Breast epithelium (tissue), 4 donors: ENCODE measurements at regions of chr7 and their contacts with region 1.

Region 1: DNA sequence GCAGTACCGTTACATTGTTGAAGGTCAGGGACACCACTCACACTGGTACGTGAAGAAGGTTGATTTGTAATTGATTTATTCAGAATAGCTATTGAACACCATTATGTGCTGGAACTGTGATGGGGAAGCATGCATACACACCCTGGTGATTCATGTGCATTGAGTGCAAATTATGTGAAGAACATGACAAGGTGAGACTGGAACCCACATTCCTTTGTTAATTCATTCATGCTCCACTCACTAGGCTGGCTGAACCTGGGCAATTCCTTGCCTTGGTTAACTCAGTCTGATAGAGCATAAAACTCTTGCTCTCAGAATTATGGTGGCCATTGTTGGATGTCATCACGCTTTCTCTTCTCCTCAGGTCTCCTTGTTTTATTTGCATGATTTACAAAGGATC is 67.3 kb upstream of the TPK1 start:
- DNase-seq: no peak
- H3K4me3 ChIP-seq: no peak overlapping the region
- H3K27ac ChIP-seq: no peak overlapping the region
- H3K4me1 ChIP-seq: no peaks in the 10 kb centered on the region
- H3K27me3 ChIP-seq: no peaks in the 10 kb centered on the region
- CTCF ChIP-seq: no peak
- POLR2A ChIP-seq: no peak

Region 2: DNA sequence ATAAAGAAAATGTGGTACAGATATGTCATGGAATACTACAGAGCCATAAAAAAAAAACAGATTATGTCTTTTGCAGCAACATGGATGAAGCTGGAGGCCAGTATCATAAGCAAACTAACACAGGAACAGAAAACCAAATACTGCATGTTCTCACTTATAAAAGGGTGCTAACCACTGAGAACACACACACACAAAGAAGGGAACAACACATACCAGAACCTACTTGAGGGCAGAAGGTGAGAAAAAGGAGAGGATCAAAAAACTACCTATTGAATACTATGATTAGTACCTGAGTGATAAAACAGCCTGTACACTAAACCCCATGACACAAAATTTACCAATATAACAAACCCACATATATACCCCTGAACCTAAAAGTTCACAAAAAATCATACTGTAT is 212.0 kb before region 1 on chr7:
- intact Hi-C with region 1: no loop called
- DNase-seq: no peak
- H3K4me3 ChIP-seq: no peak overlapping the region
- H3K27ac ChIP-seq: no peak overlapping the region
- H3K4me1 ChIP-seq: no peaks in the 10 kb centered on the region
- H3K27me3 ChIP-seq: no peaks in the 10 kb centered on the region
- CTCF ChIP-seq: no peak
- POLR2A ChIP-seq: no peak

Region 3: GRCh38 chr7:144871971-144872370 is 31.2 kb before region 1 on chr7:
- intact Hi-C with region 1: loop called (anchors 2 kb)
- DNase-seq: no peak
- H3K4me3 ChIP-seq: no peak overlapping the region
- H3K27ac ChIP-seq: no peak overlapping the region
- H3K4me1 ChIP-seq: no peaks in the 10 kb centered on the region
- H3K27me3 ChIP-seq: no peaks in the 10 kb centered on the region
- CTCF ChIP-seq: no peak
- POLR2A ChIP-seq: no peak

Region 4: DNA sequence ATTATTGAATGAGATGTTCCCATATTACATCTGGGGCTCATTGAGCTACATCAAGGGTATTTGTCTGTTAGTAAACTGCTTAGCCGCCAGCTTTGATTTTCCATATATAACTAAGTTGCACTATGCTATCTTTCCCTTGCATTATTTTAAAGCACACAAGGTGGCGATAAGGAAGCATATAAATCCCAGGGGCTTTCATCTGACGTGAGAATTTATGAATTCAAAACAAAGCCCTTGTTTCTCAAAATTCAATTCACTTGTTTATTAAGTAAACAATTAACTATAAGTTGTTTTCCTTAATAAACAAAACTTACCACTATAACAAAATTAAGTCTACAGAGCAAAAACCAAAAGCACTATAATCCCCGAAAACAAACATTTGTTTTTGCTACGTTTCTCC is 266.7 kb after region 1 on chr7:
- intact Hi-C with region 1: no loop called
- DNase-seq: no peak
- H3K4me3 ChIP-seq: no peak overlapping the region
- H3K27ac ChIP-seq: no peak overlapping the region
- H3K4me1 ChIP-seq: no peaks in the 10 kb centered on the region
- H3K27me3 ChIP-seq: no peaks in the 10 kb centered on the region
- CTCF ChIP-seq: no peak
- POLR2A ChIP-seq: no peak